GM12878 (cell line): ENCODE measurements at regions of chr14 and their contacts with region 1.

Region 1: DNA sequence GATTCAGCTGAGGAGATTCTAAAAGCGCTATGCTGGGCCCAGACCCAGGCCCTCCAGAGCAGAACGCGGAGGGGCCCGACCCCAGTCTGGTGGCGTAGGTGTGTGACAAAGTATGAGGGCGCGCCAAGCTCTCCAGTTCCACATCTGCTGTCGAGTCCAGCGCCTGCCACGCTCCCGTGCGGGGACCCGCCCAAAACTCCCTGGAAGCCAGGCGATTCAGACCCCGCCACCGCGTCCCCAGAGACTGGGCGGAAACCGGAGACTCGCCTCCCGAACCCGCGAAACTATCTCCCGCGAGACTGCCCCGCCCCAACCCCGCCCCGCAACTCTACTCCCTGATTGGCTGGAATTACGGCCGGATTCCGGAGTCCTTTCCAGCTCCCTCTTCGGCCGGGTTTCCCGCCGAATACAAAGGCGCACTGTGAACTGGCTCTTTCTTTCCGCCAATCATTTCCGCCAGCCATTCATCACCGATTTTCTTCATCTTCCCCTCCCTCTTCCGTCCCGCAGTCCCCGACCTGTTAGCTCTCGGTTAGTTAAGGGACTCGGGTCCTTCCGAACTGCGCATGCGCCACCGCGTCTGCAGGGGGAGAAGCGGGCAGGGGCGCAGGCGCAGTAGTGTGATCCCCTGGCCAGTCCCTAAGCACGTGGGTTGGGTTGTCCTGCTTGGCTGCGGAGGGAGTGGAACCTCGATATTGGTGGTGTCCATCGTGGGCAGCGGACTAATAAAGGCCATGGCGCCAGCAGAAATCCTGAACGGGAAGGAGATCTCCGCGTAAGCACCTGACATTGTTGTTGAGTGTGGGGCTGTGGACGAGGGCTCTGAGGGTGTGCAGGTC is at the start of gene MTHFD1:
- DNase-seq: peak; percentile 99
- ATAC-seq: peak; percentile 87
- H3K4me3 ChIP-seq: peak within 1 kb of the TSS; percentile 97
- H3K27ac ChIP-seq: peak within 1 kb of the TSS; percentile 82
- H3K4me1 ChIP-seq: peaks cover 10% of the 10 kb centered on the region
- H3K27me3 ChIP-seq: no peaks in the 10 kb centered on the region
- CTCF ChIP-seq: no peak
- EP300 ChIP-seq: 0 out of 4 replicates have a peak, but pooled peaks of 1 of the 2 experiments have one; percentile 13
- POLR2A ChIP-seq: peak; percentile 83
- RAD21 ChIP-seq: no peak
- polyA plus RNA-seq, gene MTHFD1: 140 to 177 TPM

Region 2: GRCh38 chr14:64349741-64350490 is 38.0 kb before region 1 on chr14:
- CTCF ChIA-PET with region 1: no interaction called
- POLR2A ChIA-PET with region 1: no interaction called
- RAD21 ChIA-PET with region 1: interaction called, 4 read pairs
- SMC1A ChIA-PET with region 1: interaction called, 20 read pairs
- in situ Hi-C with region 1: no loop called
- intact Hi-C with region 1: no loop called
- DNase-seq: no peak
- ATAC-seq: no peak
- H3K4me3 ChIP-seq: no peak overlapping the region
- H3K27ac ChIP-seq: no peak overlapping the region
- H3K4me1 ChIP-seq: no peaks in the 10 kb centered on the region
- H3K27me3 ChIP-seq: no peaks in the 10 kb centered on the region
- CTCF ChIP-seq: no peak
- EP300 ChIP-seq: no peak
- POLR2A ChIP-seq: no peak
- RAD21 ChIP-seq: no peak

Region 3: GRCh38 chr14:64407329-64407728 is 19.4 kb after region 1 on chr14:
- CTCF ChIA-PET with region 1: interaction called, 25 read pairs
- POLR2A ChIA-PET with region 1: interaction called, 12 read pairs
- RAD21 ChIA-PET with region 1: interaction called, 3 read pairs
- SMC1A ChIA-PET with region 1: interaction called, 29 read pairs
- in situ Hi-C with region 1: no loop called
- intact Hi-C with region 1: no loop called
- DNase-seq: no peak
- ATAC-seq: peak; percentile 67
- H3K4me3 ChIP-seq: no peak overlapping the region
- H3K27ac ChIP-seq: no peak overlapping the region
- H3K4me1 ChIP-seq: peaks cover 9% of the 10 kb centered on the region
- H3K27me3 ChIP-seq: no peaks in the 10 kb centered on the region
- CTCF ChIP-seq: no peak
- EP300 ChIP-seq: no peak
- POLR2A ChIP-seq: no peak
- RAD21 ChIP-seq: no peak

Region 4: DNA sequence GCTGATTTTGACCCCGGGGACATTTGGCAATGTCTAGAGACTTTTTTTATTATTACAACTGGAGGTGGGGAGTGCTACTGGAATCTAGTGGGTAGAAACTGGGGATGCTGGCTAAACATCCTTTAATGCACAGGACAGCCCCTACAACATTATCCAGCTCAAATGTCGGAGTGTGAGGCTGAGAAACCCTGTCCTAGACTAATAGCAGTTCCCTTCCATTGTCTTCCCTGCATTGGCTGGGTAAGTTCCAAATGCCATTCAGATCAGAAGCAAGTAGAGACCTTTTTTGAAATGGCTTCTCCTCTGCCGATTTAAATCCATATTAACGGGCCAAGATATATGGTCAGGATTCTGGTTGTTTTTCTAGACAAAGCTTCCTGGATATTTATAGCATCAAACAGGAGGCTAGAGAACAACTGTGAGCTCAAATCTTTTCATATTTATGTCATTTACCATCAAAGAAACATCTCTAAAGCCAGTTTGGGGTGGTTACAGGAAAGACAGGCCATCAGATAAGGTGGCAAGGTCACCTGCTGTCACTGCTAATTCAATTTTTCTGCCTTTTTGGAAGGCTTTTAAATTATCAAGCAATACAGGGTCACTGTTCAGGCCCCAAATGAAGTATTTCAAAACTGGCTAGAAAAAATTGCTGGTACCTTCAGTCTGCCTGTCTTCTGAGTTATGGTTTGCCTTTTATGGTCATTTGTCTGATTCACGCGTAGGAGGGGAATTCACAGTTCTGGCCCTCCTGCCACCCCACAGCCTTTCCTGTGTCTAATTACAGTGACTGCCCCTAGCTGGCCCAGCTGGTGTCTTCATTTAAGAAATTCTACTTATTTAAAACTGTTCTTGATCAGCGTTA is 57.3 kb after region 1 on chr14:
- CTCF ChIA-PET with region 1: interaction called, 4 read pairs
- POLR2A ChIA-PET with region 1: interaction called, 20 read pairs
- RAD21 ChIA-PET with region 1: interaction called, 12 read pairs
- SMC1A ChIA-PET with region 1: interaction called, 12 read pairs
- in situ Hi-C with region 1: no loop called
- intact Hi-C with region 1: loop called (anchors 2 kb)
- DNase-seq: peak; percentile 84
- ATAC-seq: peak; percentile 99
- H3K4me3 ChIP-seq: no peak overlapping the region
- H3K27ac ChIP-seq: peak overlapping the region; percentile 97
- H3K4me1 ChIP-seq: peaks cover 22% of the 10 kb centered on the region
- H3K27me3 ChIP-seq: no peaks in the 10 kb centered on the region
- CTCF ChIP-seq: peak in 2 of 3 experiments; percentile 15 to 20; a peak in 1 of 6 replicates
- EP300 ChIP-seq: peak; percentile 75 to 77; a peak in 2 of 4 replicates
- POLR2A ChIP-seq: peak; percentile 37; the same call in 1 of the 2 replicates
- RAD21 ChIP-seq: no peak

Region 5: DNA sequence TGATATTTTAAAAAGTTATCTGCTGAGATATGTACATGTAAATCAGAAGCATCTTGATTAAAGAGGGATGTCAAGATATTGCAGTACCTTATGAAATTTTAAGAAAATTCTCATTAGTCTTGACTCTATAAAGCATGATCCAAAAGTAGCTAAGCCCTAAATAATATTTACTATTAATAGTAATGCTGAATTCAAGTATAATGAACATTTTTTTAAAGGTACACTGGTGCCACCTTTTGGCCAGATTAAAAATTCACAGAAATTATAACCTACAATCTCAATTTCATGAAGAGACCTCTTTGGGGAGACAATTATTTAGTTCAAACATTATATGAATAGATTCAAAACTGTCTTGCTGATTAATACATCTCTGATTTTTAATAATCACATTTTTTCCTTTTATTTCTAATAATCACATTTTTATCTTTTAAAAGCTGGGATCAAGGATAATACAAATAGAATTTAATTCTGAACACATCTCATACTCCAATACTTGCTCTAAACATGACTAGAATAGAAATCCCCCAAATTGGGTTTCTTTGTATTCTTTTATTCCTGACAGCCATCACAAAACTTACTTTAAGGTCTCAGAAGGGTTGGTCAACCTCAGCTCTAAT is 90.8 kb after region 1 on chr14:
- CTCF ChIA-PET with region 1: interaction called, 11 read pairs
- POLR2A ChIA-PET with region 1: no interaction called
- RAD21 ChIA-PET with region 1: interaction called, 3 read pairs
- SMC1A ChIA-PET with region 1: interaction called, 4 read pairs
- in situ Hi-C with region 1: no loop called
- intact Hi-C with region 1: no loop called
- DNase-seq: no peak
- ATAC-seq: peak; percentile 39; the same call in 1 of the 3 replicates
- H3K4me3 ChIP-seq: no peak overlapping the region
- H3K27ac ChIP-seq: no peak overlapping the region
- H3K4me1 ChIP-seq: peaks cover 7% of the 10 kb centered on the region
- H3K27me3 ChIP-seq: no peaks in the 10 kb centered on the region
- CTCF ChIP-seq: peak in 2 of 3 experiments; percentile 33 to 54; a peak in 3 of 6 replicates
- EP300 ChIP-seq: no peak
- POLR2A ChIP-seq: no peak
- RAD21 ChIP-seq: peak; percentile 57

Region 6: GRCh38 chr14:64510825-64511671 is 123.1 kb after region 1 on chr14:
- CTCF ChIA-PET with region 1: interaction called, 13 read pairs
- POLR2A ChIA-PET with region 1: interaction called, 9 read pairs
- RAD21 ChIA-PET with region 1: interaction called, 3 read pairs
- SMC1A ChIA-PET with region 1: interaction called, 5 read pairs
- in situ Hi-C with region 1: no loop called
- intact Hi-C with region 1: no loop called
- DNase-seq: no peak
- ATAC-seq: peak; percentile 50
- H3K4me3 ChIP-seq: peak overlapping the region; percentile 40; the same call in 1 of the 2 replicates
- H3K27ac ChIP-seq: peak overlapping the region; percentile 68
- H3K4me1 ChIP-seq: peaks cover 25% of the 10 kb centered on the region
- H3K27me3 ChIP-seq: no peaks in the 10 kb centered on the region
- CTCF ChIP-seq: peak; percentile 82 to 95 (median 84)
- EP300 ChIP-seq: no peak
- POLR2A ChIP-seq: no peak
- RAD21 ChIP-seq: peak; percentile 68

Region 7: DNA sequence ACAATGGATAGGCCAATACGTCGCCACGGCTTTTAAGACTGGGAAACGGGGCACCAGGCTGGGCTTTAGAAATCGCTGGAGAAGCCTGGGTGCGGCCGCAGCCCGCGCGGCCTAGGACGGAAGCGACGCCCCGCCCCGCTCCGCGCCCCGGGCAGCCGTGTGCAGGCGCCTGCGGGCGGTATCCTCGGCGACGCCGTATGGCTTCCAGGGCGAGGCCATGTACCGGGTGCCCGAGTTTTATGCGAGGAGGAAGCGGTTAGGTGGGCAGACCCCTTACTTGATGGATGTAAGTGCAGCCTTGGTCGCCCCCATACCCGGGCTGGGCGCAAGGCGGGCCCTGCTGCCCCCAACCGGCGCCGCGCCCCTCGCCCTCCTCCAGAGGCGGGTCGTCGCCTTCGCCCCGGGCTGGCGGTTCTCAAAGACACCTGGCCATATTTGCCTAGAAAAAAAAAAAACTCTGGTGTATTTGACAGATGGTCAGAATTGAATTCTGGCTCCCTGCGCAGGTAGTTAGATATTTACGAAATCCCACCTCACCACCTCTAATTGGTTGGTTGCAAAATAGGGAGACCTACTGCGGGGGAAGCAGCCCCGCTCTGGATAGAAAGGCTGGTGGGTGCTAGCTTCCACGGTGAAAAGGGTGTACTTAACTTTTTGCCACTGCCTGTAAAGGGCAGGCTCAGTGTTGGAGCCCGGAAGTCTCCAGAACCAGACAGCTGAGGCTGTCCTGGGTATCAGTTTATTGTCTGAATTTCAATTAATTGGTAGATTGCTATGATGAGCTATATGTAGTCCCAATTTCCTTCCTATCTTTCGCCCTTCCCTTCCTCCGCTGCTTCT is 162.1 kb after region 1 on chr14 and contains the start of gene PPP1R36:
- CTCF ChIA-PET with region 1: no interaction called
- POLR2A ChIA-PET with region 1: no interaction called
- RAD21 ChIA-PET with region 1: no interaction called
- SMC1A ChIA-PET with region 1: no interaction called
- in situ Hi-C with region 1: no loop called
- intact Hi-C with region 1: no loop called
- DNase-seq: no peak
- ATAC-seq: peak; percentile 89
- H3K4me3 ChIP-seq: no peak within 1 kb of the TSS
- H3K27ac ChIP-seq: no peak within 1 kb of the TSS
- H3K4me1 ChIP-seq: no peaks in the 10 kb centered on the region
- H3K27me3 ChIP-seq: peaks cover 3 to 14% of the 10 kb centered on the region in 2 experiments
- CTCF ChIP-seq: no peak
- EP300 ChIP-seq: no peak
- POLR2A ChIP-seq: no peak
- RAD21 ChIP-seq: no peak
- polyA plus RNA-seq, gene PPP1R36: not detected